ENCODE measurements at regions of chr19 and their contacts with region 1.

Region 1: DNA sequence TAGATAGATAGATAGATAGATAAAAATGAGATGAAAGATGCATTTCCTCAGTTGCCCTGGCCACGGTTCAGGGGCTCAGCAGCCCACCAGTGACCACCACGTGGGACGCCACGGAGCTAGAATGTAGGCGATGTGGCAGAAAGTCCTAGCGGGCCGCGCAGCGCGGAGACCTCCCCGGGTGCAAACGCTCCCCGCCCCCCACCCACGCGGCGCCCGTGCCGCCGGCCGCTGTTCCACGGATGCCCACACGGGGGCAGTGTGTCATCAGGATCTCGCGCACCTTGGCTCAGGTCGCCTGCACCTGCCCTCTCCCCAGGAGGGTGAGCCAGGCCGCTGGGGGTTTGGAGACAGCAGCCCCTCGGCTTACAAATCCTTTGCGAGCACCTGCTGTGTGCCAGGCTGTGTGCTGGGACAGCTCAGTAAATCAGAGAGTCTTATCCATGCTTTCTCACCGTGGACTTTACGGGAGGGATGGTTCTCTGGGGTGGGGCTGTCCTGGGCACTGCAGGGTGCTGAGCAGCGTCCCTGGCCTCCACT is 13.7 kb upstream of the TLE5 start:
- H3K4me3 ChIP-seq: no peak overlapping the region; the same call in 1 of the 2 replicates
- H3K27ac ChIP-seq: no peak overlapping the region; the same call in 1 of the 2 replicates
- H3K4me1 ChIP-seq: no peaks in the 10 kb centered on the region
- CTCF ChIP-seq: peak; percentile 90

Region 2: GRCh38 chr19:2962045-2962561 is 113.9 kb before region 1 on chr19:
- CTCF ChIA-PET with region 1: interaction called, 13 read pairs
- POLR2A ChIA-PET with region 1: no interaction called
- H3K4me3 ChIP-seq: no peak overlapping the region
- H3K27ac ChIP-seq: no peak overlapping the region
- H3K4me1 ChIP-seq: no peaks in the 10 kb centered on the region
- CTCF ChIP-seq: peak; percentile 75

Region 3: DNA sequence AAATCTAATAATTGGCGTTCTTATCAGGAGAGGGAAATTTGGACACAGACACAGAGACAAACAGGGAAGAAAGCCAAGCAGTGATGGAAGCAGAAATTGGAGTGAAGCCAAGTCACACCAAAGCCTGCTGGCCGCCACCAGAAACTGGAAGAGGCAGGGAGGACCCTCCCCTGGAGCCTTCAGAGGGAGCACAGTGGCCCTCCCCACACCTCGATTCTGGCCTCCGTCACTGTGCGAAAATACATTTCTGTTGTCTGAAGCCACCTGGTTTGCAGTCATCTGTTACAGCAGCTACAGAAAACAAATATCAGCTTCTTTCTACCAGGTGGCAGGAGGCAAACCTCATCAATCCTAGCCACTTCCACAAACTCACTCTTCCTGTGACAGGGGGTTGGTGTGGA is 106.9 kb before region 1 on chr19:
- CTCF ChIA-PET with region 1: interaction called, 12 read pairs
- POLR2A ChIA-PET with region 1: no interaction called
- H3K4me3 ChIP-seq: no peak overlapping the region
- H3K27ac ChIP-seq: peak overlapping the region; percentile 28
- H3K4me1 ChIP-seq: peaks cover 9% of the 10 kb centered on the region
- CTCF ChIP-seq: no peak

Region 4: DNA sequence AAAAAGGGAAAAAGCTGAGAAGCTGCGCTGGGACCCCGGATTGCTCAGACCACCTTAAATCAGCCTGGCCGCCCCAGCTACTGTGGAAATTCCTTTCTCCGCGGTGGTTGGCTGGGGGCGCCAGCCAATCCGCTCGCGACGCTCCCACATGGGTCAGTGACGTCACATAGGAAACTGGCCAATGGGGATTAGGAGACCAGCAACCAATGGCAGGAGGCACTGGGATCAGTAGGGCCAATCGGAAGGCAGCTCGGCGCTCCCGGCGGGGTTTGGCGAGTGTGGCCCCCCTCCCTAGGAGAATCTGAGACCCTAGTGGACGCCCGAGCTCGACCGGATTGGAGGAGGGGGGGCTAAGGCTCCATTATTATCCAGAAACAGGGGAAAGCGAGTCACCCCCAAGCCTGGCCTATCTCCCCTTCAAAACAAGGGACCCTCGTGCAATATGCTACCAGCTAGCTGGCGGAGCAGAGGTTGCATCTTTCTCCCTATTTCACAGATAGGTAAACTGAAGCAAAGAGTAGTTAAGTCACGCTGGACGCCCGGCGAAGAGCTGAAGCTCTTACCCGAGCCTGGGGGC is 40.3 kb before region 1 on chr19:
- CTCF ChIA-PET with region 1: interaction called, 23 read pairs
- POLR2A ChIA-PET with region 1: interaction called, 3 read pairs
- H3K4me3 ChIP-seq: peak overlapping the region; percentile 42
- H3K27ac ChIP-seq: peak overlapping the region; percentile 96
- H3K4me1 ChIP-seq: peaks cover 8% of the 10 kb centered on the region; the same call in 1 of the 2 replicates
- CTCF ChIP-seq: 0 out of 2 replicates have a peak, but pooled peaks have one; percentile 18

Region 5: DNA sequence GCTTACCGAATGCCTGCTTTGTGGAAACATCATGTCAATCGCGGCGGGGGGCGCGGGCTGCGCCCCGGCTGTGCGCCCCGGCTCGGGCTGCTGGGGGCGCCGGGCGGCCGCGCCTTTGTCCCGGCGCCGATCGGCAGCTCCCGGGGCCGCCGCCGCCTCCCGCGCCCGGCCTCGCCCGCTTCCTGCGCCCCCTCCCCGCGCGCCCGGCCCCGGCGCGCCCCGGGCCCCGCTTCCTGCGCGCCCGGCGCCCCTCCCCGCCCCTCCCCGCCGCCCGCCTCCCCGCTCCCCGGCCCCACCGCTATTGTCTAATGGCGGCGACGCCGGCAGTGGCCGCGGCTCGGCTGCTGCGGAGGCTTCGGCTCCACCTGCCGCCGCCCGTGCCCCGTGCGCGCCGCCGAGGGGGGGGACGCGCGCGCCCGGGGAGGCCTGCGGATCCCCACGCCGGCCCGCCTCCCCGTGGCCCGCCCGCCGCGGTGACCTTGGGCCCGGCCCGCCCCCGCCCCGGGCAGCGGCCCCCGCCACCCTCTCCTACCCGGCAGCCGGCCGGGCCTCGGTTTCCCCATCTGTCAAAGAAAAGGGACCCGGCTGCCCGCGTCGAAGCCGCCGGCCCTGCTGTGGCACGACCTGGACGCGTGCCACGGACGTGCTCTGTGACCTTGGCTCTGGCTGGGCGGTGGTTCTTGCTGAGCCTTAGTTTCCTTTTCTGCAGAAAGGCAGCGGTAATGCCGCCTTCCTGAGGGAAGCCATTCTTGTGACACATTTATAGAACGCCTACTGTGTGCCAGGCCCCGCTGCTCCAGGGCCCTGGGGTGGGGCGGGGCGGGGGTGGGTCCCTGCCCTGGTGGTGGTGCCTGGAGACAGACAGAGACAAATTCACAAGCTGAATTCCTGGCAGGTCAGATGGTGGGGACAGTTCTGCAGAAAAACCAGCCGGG is 13.5 kb before region 1 on chr19 and contains the start of gene TLE5:
- CTCF ChIA-PET with region 1: interaction called, 12 read pairs
- POLR2A ChIA-PET with region 1: no interaction called
- H3K4me3 ChIP-seq: peak within 1 kb of the TSS; percentile 59
- H3K27ac ChIP-seq: peak within 1 kb of the TSS; percentile 75; the same call in 1 of the 2 replicates
- H3K4me1 ChIP-seq: peaks cover 6% of the 10 kb centered on the region
- CTCF ChIP-seq: no peak

Region 6: GRCh38 chr19:3108775-3109174 is 32.8 kb after region 1 on chr19:
- CTCF ChIA-PET with region 1: interaction called, 39 read pairs
- POLR2A ChIA-PET with region 1: no interaction called
- H3K4me3 ChIP-seq: no peak overlapping the region
- H3K27ac ChIP-seq: no peak overlapping the region
- H3K4me1 ChIP-seq: no peaks in the 10 kb centered on the region
- CTCF ChIP-seq: peak; percentile 78

Region 7: GRCh38 chr19:3125900-3126524 is 50.0 kb after region 1 on chr19:
- CTCF ChIA-PET with region 1: interaction called, 14 read pairs
- POLR2A ChIA-PET with region 1: no interaction called
- H3K4me3 ChIP-seq: no peak overlapping the region
- H3K27ac ChIP-seq: no peak overlapping the region
- H3K4me1 ChIP-seq: no peaks in the 10 kb centered on the region
- CTCF ChIP-seq: peak; percentile 98

Region 8: GRCh38 chr19:3171894-3172672 is 96.1 kb after region 1 on chr19:
- CTCF ChIA-PET with region 1: no interaction called
- POLR2A ChIA-PET with region 1: no interaction called
- H3K4me3 ChIP-seq: no peak overlapping the region
- H3K27ac ChIP-seq: no peak overlapping the region
- H3K4me1 ChIP-seq: no peaks in the 10 kb centered on the region
- CTCF ChIP-seq: no peak

Region 9: GRCh38 chr19:3224346-3225168 is 148.6 kb after region 1 on chr19 and contains the start of gene CELF5:
- CTCF ChIA-PET with region 1: no interaction called
- POLR2A ChIA-PET with region 1: no interaction called
- H3K4me3 ChIP-seq: peak within 1 kb of the TSS; percentile 33
- H3K27ac ChIP-seq: no peak within 1 kb of the TSS
- H3K4me1 ChIP-seq: no peaks in the 10 kb centered on the region
- CTCF ChIP-seq: no peak